Endothelial cell of umbilical vein (primary cell): ENCODE measurements at regions of chr15 and their contacts with region 1.

Region 1: GRCh38 chr15:83564975-83565532 is 88.9 kb upstream of the ADAMTSL3 start:
- DNase-seq: no peak
- H3K4me3 ChIP-seq: no peak overlapping the region
- H3K27ac ChIP-seq: no peak overlapping the region
- H3K4me1 ChIP-seq: no peaks in the 10 kb centered on the region
- H3K27me3 ChIP-seq: no peaks in the 10 kb centered on the region
- CTCF ChIP-seq: no peak
- POLR2A ChIP-seq: no peak

Region 2: GRCh38 chr15:83115831-83116565 is 449.1 kb before region 1 on chr15:
- CTCF ChIA-PET with region 1: no interaction called
- POLR2A ChIA-PET with region 1: no interaction called
- dilution Hi-C with region 1: no loop called
- intact Hi-C with region 1: no loop called
- DNase-seq: no peak
- H3K4me3 ChIP-seq: no peak overlapping the region
- H3K27ac ChIP-seq: no peak overlapping the region
- H3K4me1 ChIP-seq: peaks cover 33% of the 10 kb centered on the region
- H3K27me3 ChIP-seq: no peaks in the 10 kb centered on the region
- CTCF ChIP-seq: no peak
- POLR2A ChIP-seq: no peak

Region 3: GRCh38 chr15:83300826-83301225 is 264.2 kb before region 1 on chr15:
- CTCF ChIA-PET with region 1: no interaction called
- POLR2A ChIA-PET with region 1: no interaction called
- dilution Hi-C with region 1: no loop called
- intact Hi-C with region 1: no loop called
- DNase-seq: no peak
- H3K4me3 ChIP-seq: no peak overlapping the region
- H3K27ac ChIP-seq: no peak overlapping the region
- H3K4me1 ChIP-seq: no peaks in the 10 kb centered on the region
- H3K27me3 ChIP-seq: no peaks in the 10 kb centered on the region
- CTCF ChIP-seq: no peak
- POLR2A ChIP-seq: no peak

Region 4: DNA sequence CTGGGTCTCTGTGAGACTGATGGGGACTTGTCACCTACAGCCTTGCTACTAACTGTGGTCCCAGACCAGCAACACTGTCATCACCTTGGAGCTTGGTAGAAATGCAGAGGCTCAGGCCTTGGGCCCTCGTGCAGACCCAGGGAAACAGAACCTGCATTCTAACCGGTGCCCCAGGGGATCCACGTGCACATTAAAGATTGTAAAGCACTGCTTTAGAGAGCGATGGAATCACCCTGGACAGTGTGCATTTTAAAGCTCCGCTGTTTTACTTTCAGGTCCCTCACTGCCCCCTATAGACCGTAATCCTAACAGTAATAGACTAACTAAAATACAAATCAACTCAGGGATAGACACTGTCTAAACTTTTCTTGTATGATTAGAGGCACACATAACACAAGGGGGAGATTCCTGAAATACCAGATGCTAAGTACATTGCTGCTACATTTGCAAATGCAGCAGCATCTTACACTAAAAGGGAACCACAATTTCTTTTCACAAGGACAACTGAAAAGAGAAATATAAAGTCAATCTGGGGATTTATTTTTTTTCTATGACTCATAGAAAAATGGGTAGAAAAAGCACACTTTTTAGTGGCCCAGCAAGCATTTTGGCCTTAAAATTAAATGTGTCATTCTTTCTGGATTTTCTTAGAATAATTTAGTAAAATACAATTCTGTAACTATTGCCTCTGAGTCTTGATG is 128.4 kb before region 1 on chr15:
- CTCF ChIA-PET with region 1: interaction called, 58 read pairs
- POLR2A ChIA-PET with region 1: no interaction called
- dilution Hi-C with region 1: no loop called
- intact Hi-C with region 1: no loop called
- DNase-seq: peak; percentile 47
- H3K4me3 ChIP-seq: no peak overlapping the region
- H3K27ac ChIP-seq: no peak overlapping the region
- H3K4me1 ChIP-seq: no peaks in the 10 kb centered on the region
- H3K27me3 ChIP-seq: peaks cover 0 to 3% of the 10 kb centered on the region in 2 experiments
- CTCF ChIP-seq: peak; percentile 20 to 45
- POLR2A ChIP-seq: no peak

Region 5: DNA sequence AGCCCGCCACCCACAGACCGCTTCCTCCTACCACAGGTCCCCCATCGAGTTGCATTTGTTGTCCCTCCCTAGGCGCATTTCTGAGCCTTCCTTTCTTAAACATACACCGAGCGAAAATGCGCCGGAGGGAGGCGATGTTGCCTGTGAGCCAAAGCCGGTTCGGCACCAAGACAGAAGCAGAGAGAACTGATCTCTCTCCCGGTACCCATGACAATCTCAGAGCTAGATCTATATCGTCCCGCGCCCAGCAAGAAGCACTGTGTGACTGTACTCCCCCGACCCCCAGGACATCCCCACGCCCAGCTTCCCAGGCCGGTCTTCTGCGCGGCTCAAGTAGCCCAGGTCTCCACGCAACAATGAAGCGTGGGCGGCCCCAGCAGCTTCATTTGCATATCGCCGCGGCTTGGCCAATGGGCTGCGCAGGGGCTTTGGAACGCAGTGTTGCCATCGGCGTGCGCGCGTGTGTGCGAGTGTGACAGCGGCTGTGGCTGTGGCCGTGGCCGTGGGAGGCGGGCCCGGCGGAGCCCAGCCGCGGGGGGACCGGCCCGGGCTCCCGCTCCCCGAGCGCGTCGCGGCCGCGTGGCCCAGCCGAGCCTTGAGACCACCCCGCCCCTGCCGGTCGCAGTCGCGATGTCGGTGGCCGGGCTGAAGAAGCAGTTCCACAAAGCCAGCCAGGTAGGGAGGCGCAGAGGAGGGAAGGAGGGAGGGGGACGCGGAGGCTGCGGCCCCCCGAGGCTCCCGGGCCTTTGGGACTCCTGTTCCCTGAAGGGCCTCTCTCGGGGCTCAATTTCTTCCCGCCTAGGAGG is 117.9 kb before region 1 on chr15 and contains the start of gene SH3GL3:
- CTCF ChIA-PET with region 1: interaction called, 13 read pairs
- POLR2A ChIA-PET with region 1: interaction called, 5 read pairs
- dilution Hi-C with region 1: no loop called
- intact Hi-C with region 1: no loop called
- DNase-seq: peak; percentile 80
- H3K4me3 ChIP-seq: peak within 1 kb of the TSS; percentile 29 to 46 (median 32)
- H3K27ac ChIP-seq: no peak within 1 kb of the TSS
- H3K4me1 ChIP-seq: no peaks in the 10 kb centered on the region
- H3K27me3 ChIP-seq: peaks cover 8 to 19% of the 10 kb centered on the region in 2 experiments
- CTCF ChIP-seq: peak; percentile 7 to 35
- POLR2A ChIP-seq: no peak
- total RNA-seq, gene SH3GL3: not detected in 2 replicates

Region 6: GRCh38 chr15:83498801-83499200 is 66.3 kb before region 1 on chr15:
- CTCF ChIA-PET with region 1: no interaction called
- POLR2A ChIA-PET with region 1: no interaction called
- dilution Hi-C with region 1: no loop called
- intact Hi-C with region 1: no loop called
- DNase-seq: no peak
- H3K4me3 ChIP-seq: no peak overlapping the region
- H3K27ac ChIP-seq: no peak overlapping the region
- H3K4me1 ChIP-seq: no peaks in the 10 kb centered on the region
- H3K27me3 ChIP-seq: no peaks in the 10 kb centered on the region
- CTCF ChIP-seq: no peak
- POLR2A ChIP-seq: no peak

Region 7: GRCh38 chr15:83626171-83626802 is 61.2 kb after region 1 on chr15:
- CTCF ChIA-PET with region 1: no interaction called
- POLR2A ChIA-PET with region 1: no interaction called
- dilution Hi-C with region 1: no loop called
- intact Hi-C with region 1: no loop called
- DNase-seq: no peak
- H3K4me3 ChIP-seq: no peak overlapping the region
- H3K27ac ChIP-seq: no peak overlapping the region
- H3K4me1 ChIP-seq: no peaks in the 10 kb centered on the region
- H3K27me3 ChIP-seq: no peaks in the 10 kb centered on the region
- CTCF ChIP-seq: no peak
- POLR2A ChIP-seq: no peak

Region 8: GRCh38 chr15:83837945-83838571 is 273.0 kb after region 1 on chr15:
- CTCF ChIA-PET with region 1: no interaction called
- POLR2A ChIA-PET with region 1: no interaction called
- dilution Hi-C with region 1: no loop called
- intact Hi-C with region 1: loop called (anchors 1 kb)
- DNase-seq: no peak
- H3K4me3 ChIP-seq: no peak overlapping the region
- H3K27ac ChIP-seq: no peak overlapping the region
- H3K4me1 ChIP-seq: no peaks in the 10 kb centered on the region
- H3K27me3 ChIP-seq: no peaks in the 10 kb centered on the region
- CTCF ChIP-seq: peak; percentile 13 to 32
- POLR2A ChIP-seq: no peak

Region 9: DNA sequence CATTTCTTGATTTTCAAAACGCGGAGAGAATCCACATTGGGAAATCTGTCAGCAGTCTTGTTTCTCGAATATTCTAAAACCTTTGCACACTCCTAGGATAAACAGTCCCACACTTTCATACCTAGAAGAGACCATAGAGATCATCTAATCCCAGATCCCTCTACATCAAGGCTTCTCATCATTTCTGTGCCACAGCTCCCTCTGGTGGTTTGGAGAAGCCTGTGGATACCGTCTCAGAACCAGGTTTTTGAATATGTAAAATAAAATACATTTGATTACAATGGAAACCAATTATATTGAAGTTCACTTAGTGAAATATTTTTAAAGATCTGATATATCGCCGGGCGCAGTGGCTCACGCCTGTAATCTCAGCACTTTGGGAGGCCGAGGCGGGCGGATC is 458.6 kb after region 1 on chr15:
- CTCF ChIA-PET with region 1: no interaction called
- POLR2A ChIA-PET with region 1: no interaction called
- dilution Hi-C with region 1: no loop called
- intact Hi-C with region 1: loop called (anchors 1 kb)
- DNase-seq: no peak
- H3K4me3 ChIP-seq: no peak overlapping the region
- H3K27ac ChIP-seq: no peak overlapping the region
- H3K4me1 ChIP-seq: no peaks in the 10 kb centered on the region
- H3K27me3 ChIP-seq: no peaks in the 10 kb centered on the region
- CTCF ChIP-seq: peak; percentile 21 to 30
- POLR2A ChIP-seq: no peak

Region 10: GRCh38 chr15:84035399-84035766 is 470.3 kb after region 1 on chr15:
- CTCF ChIA-PET with region 1: no interaction called
- POLR2A ChIA-PET with region 1: no interaction called
- dilution Hi-C with region 1: no loop called
- intact Hi-C with region 1: loop called (anchors 1 kb)
- DNase-seq: no peak
- H3K4me3 ChIP-seq: no peak overlapping the region
- H3K27ac ChIP-seq: no peak overlapping the region
- H3K4me1 ChIP-seq: no peaks in the 10 kb centered on the region
- H3K27me3 ChIP-seq: no peaks in the 10 kb centered on the region
- CTCF ChIP-seq: peak in 1 of 2 donors; percentile 7
- POLR2A ChIP-seq: no peak